PC-9 (cell line): ENCODE measurements at regions of chr12 and their contacts with region 1.

Region 1: GRCh38 chr12:70351076-70351475 is 15.0 kb upstream of the KCNMB4 start:
- DNase-seq: no peak
- H3K4me3 ChIP-seq: no peak overlapping the region
- H3K27ac ChIP-seq: no peak overlapping the region
- H3K4me1 ChIP-seq: no peaks in the 10 kb centered on the region
- H3K27me3 ChIP-seq: no peaks in the 10 kb centered on the region
- CTCF ChIP-seq: no peak

Region 2: DNA sequence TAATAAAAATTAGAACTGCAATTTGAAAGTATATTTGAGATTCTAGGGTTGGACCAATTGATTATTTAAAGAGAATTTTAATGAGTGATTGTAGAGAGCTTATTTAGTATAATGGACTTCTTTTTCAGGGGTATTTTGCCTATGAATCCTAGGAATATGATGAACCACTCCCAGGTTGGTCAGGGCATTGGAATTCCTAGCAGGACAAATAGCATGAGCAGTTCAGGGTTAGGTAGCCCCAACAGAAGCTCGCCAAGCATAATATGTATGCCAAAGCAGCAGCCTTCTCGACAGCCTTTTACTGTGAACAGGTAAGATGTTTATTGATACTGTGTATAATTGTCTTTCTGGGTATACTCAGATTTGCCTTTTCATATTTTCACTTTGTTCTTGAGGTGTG is 20.9 kb before region 1 on chr12:
- CTCF ChIA-PET with region 1: no interaction called
- POLR2A ChIA-PET with region 1: interaction called, 12 read pairs
- intact Hi-C with region 1: no loop called
- DNase-seq: no peak
- H3K4me3 ChIP-seq: no peak overlapping the region
- H3K27ac ChIP-seq: no peak overlapping the region
- H3K4me1 ChIP-seq: peaks cover 8% of the 10 kb centered on the region; the same call in 1 of the 2 replicates
- H3K27me3 ChIP-seq: no peaks in the 10 kb centered on the region
- CTCF ChIP-seq: no peak